ENCODE measurements at regions of chrX and their contacts with region 1.

Region 1: DNA sequence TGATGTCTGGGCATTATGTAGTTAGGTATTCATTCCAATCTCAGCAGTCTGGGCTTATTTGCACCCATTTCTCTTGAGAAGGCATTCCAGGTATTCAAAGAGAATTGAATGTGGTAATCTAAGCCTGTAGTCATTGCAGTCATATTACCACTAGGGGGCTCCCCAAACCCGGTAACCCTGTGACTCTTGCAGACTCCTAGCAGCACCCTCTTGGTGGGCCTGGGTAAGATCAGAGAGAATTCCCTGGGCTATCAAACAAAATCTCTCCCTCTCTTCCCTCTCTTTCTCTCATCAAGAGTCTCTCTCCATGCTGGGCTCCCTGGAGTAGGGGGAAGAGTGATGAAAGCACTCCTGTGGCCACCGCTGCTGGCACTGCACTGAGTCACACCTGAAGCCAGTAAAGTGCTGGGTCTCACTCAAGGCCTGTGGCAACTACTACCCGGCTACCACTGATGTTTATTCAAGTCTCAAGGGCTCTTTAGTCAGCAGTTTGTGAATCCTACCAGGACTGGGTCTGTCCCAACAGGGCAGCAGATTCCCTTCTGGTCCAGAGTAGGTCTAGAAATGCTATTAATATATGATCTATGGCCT is 187.7 kb upstream of the NUDT10 start:
- DNase-seq: no peak
- ATAC-seq: no peak
- H3K4me3 ChIP-seq: no peak overlapping the region
- H3K27ac ChIP-seq: no peak overlapping the region
- H3K4me1 ChIP-seq: no peaks in the 10 kb centered on the region
- H3K27me3 ChIP-seq: no peaks in the 10 kb centered on the region

Region 2: GRCh38 chrX:50952406-50952805 is 192.5 kb before region 1 on chrX:
- intact Hi-C with region 1: no loop called
- DNase-seq: no peak
- ATAC-seq: no peak
- H3K4me3 ChIP-seq: no peak overlapping the region
- H3K27ac ChIP-seq: no peak overlapping the region
- H3K4me1 ChIP-seq: no peaks in the 10 kb centered on the region
- H3K27me3 ChIP-seq: no peaks in the 10 kb centered on the region

Region 3: GRCh38 chrX:51461053-51462044 is 316.4 kb after region 1 on chrX:
- intact Hi-C with region 1: loop called in 1 of 4 experiments (anchors 10 kb)
- DNase-seq: no peak
- ATAC-seq: no peak
- H3K4me3 ChIP-seq: no peak overlapping the region
- H3K27ac ChIP-seq: no peak overlapping the region
- H3K4me1 ChIP-seq: no peaks in the 10 kb centered on the region
- H3K27me3 ChIP-seq: no peaks in the 10 kb centered on the region